ENCODE measurements at regions of chr16 and their contacts with region 1.

Region 1: GRCh38 chr16:22190776-22191531 is 15.1 kb upstream of the EEF2K start:
- DNase-seq: peak; percentile 100
- ATAC-seq: peak; percentile 71
- H3K4me3 Mint-ChIP-seq: peak overlapping the region; percentile 94
- H3K27ac Mint-ChIP-seq: peak overlapping the region; percentile 100
- H3K4me1 Mint-ChIP-seq: peaks cover 59% of the 10 kb centered on the region
- H3K27me3 Mint-ChIP-seq: peaks cover 2% of the 10 kb centered on the region
- CTCF ChIP-seq: no peak

Region 2: GRCh38 chr16:21683184-21683583 is 507.8 kb before region 1 on chr16:
- CTCF ChIA-PET with region 1: no interaction called
- POLR2A ChIA-PET with region 1: no interaction called
- intact Hi-C with region 1: no loop called
- DNase-seq: no peak
- ATAC-seq: no peak
- H3K4me3 Mint-ChIP-seq: no peak overlapping the region
- H3K27ac Mint-ChIP-seq: no peak overlapping the region
- H3K4me1 Mint-ChIP-seq: no peaks in the 10 kb centered on the region
- H3K27me3 Mint-ChIP-seq: peaks cover 2% of the 10 kb centered on the region
- CTCF ChIP-seq: no peak

Region 3: GRCh38 chr16:21989133-21989532 is 201.8 kb before region 1 on chr16:
- CTCF ChIA-PET with region 1: interaction called, 11 read pairs
- POLR2A ChIA-PET with region 1: no interaction called
- intact Hi-C with region 1: no loop called
- DNase-seq: no peak
- ATAC-seq: no peak
- H3K4me3 Mint-ChIP-seq: no peak overlapping the region
- H3K27ac Mint-ChIP-seq: no peak overlapping the region
- H3K4me1 Mint-ChIP-seq: peaks cover 11% of the 10 kb centered on the region
- H3K27me3 Mint-ChIP-seq: no peaks in the 10 kb centered on the region
- CTCF ChIP-seq: no peak

Region 4: DNA sequence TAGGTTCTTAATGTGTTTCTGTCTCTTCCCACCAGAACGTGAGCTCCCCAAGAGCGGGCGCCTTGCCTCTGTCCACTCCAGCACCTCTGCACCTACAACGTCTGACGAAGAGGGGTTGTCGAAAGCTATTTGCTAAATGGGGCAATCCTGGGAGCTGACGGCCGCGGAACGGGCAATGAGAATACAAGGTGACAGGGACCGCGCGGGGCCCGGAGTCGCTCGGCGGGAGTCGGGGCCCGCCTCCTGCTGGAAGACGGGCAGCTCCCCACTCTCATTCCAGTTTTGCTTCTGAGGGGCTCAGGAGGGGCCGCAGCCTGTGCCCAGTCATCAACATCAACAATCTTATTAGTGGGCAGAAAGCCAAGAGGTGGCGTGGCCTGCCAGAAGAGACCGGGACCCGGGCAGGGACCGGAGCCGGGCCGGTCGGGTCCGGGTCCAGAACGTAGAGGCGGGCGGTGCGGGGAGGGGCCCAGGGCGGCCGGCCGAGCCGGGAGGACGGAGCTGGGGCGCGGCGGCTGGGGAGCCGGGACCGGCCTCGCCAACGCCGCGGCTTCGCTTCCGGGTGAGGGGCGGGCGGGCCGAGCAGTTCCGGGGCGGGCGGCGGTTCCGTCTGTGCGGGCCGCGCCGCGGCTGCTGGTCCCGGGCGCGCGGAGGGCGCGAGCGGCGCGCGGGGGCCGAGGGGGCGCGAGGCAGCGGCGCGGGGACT is 183.3 kb before region 1 on chr16 and contains the start of gene MOSMO:
- CTCF ChIA-PET with region 1: interaction called, 82 read pairs
- POLR2A ChIA-PET with region 1: interaction called, 8 read pairs
- intact Hi-C with region 1: loop called (anchors 2 kb)
- DNase-seq: peak; percentile 63
- ATAC-seq: peak; percentile 81
- H3K4me3 Mint-ChIP-seq: peak within 1 kb of the TSS; percentile 86
- H3K27ac Mint-ChIP-seq: peak within 1 kb of the TSS; percentile 82
- H3K4me1 Mint-ChIP-seq: peaks cover 42% of the 10 kb centered on the region
- H3K27me3 Mint-ChIP-seq: no peaks in the 10 kb centered on the region
- CTCF ChIP-seq: no peak
- total RNA-seq, gene MOSMO: 5.4 to 7.0 TPM

Region 5: GRCh38 chr16:22098405-22099255 is 92.3 kb before region 1 on chr16:
- CTCF ChIA-PET with region 1: interaction called, 17 read pairs
- POLR2A ChIA-PET with region 1: interaction called, 4 read pairs
- intact Hi-C with region 1: loop called (anchors 5 kb)
- DNase-seq: peak; percentile 11
- ATAC-seq: peak; percentile 95
- H3K4me3 Mint-ChIP-seq: no peak overlapping the region
- H3K27ac Mint-ChIP-seq: no peak overlapping the region
- H3K4me1 Mint-ChIP-seq: no peaks in the 10 kb centered on the region
- H3K27me3 Mint-ChIP-seq: peaks cover 13% of the 10 kb centered on the region
- CTCF ChIP-seq: peak; percentile 62

Region 6: GRCh38 chr16:22250522-22250921 is 59.6 kb after region 1 on chr16:
- CTCF ChIA-PET with region 1: no interaction called
- POLR2A ChIA-PET with region 1: no interaction called
- intact Hi-C with region 1: no loop called
- DNase-seq: no peak
- ATAC-seq: no peak
- H3K4me3 Mint-ChIP-seq: no peak overlapping the region
- H3K27ac Mint-ChIP-seq: no peak overlapping the region
- H3K4me1 Mint-ChIP-seq: no peaks in the 10 kb centered on the region
- H3K27me3 Mint-ChIP-seq: no peaks in the 10 kb centered on the region
- CTCF ChIP-seq: no peak

Region 7: GRCh38 chr16:22297114-22297878 is 106.3 kb after region 1 on chr16 and contains the start of gene POLR3E:
- CTCF ChIA-PET with region 1: interaction called, 37 read pairs
- POLR2A ChIA-PET with region 1: interaction called, 29 read pairs
- intact Hi-C with region 1: loop called (anchors 2 kb)
- DNase-seq: peak; percentile 100
- ATAC-seq: peak; percentile 91
- H3K4me3 Mint-ChIP-seq: peak within 1 kb of the TSS; percentile 90
- H3K27ac Mint-ChIP-seq: peak within 1 kb of the TSS; percentile 96
- H3K4me1 Mint-ChIP-seq: peaks cover 33% of the 10 kb centered on the region
- H3K27me3 Mint-ChIP-seq: no peaks in the 10 kb centered on the region
- CTCF ChIP-seq: peak; percentile 79
- total RNA-seq, gene POLR3E: 66.9 to 67.9 TPM

Region 8: GRCh38 chr16:22346483-22346882 is 155.5 kb after region 1 on chr16:
- CTCF ChIA-PET with region 1: no interaction called
- POLR2A ChIA-PET with region 1: no interaction called
- intact Hi-C with region 1: no loop called
- DNase-seq: no peak
- ATAC-seq: no peak
- H3K4me3 Mint-ChIP-seq: no peak overlapping the region
- H3K27ac Mint-ChIP-seq: peak overlapping the region; percentile 9
- H3K4me1 Mint-ChIP-seq: peaks cover 5% of the 10 kb centered on the region
- H3K27me3 Mint-ChIP-seq: no peaks in the 10 kb centered on the region
- CTCF ChIP-seq: no peak